Posterior vena cava (tissue), 2 donors: ENCODE measurements at regions of chr20 and their contacts with region 1.

Region 1: DNA sequence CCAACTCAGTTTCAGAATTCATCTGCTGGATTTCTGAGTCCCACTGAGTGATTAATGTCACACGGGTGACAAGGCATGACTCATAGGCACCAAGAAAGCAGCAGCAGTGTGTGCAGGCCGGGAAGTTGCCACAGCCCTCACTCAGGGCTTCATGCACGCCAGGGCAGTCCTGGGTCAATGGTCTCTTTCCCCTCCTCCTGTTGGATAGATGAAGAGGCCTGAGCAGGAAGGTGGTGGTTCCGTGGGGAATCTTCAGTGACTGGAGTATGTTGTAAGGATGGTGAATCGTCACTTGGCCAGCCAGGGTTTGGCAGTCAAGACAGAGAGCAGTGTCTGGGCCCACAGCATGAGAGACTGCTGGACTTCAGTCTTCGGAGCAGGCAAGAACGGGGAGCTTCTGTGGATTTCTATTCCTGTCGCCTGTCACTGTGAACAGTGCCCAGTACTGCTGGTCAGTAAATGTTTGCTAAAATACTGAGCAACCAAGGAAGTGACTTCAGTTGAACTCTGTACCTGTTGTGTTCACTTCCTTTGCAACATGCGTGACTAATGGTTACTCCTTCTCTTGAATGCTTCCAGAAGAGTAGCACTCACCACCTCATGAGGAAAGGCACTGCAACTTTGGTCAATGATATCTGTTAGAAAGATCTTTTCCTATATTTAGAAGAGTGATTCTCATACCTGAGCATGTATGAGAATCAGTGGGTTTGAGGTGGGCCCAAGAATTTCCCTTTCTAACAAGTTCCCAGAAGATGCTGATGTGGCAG is 62.0 kb upstream of the CD93 start:
- DNase-seq: peak; percentile 91

Region 2: GRCh38 chr20:21189761-21190523 is 1958.2 kb before region 1 on chr20:
- intact Hi-C with region 1: no loop called
- DNase-seq: no peak

Region 3: GRCh38 chr20:22207280-22207679 is 940.9 kb before region 1 on chr20:
- intact Hi-C with region 1: no loop called
- DNase-seq: no peak

Region 4: DNA sequence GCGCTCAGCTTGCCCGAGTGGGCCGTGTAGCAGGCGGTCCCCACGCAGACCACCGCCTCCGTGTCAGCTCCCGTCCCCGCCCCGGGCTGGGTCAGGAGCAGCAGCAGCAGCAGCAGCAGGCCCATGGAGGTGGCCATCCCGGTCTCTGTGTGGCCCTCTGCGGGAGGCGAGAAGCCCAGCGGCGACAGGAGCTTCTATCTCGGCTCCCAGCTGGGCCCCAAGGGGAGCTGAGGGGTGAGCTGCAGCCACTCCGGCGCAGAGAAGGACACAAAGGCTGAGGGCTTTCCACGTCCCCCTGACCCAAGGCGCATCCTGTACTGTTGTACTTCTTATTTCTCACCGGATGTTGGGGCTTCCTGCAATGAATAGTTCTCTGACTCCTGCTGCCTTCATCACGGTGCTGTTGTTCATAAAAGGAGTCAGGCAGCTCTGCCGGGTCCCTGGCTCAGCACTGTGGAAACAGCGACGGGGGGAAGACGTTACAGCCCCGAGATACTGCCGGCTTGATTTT is 62.0 kb before region 1 on chr20 and contains the start of gene CD93:
- intact Hi-C with region 1: loop called (anchors 5 to 10 kb)
- DNase-seq: peak; percentile 90
- total RNA-seq, gene CD93: 79.4 to 88.2 TPM